HCT116 (cell line): ENCODE measurements at regions of chrX and their contacts with region 1.

Region 1: GRCh38 chrX:121308276-121308805 is 260.9 kb downstream of the GLUD2 start:
- DNase-seq: peak; percentile 10
- ATAC-seq: peak; percentile 83
- H3K4me3 ChIP-seq: no peak overlapping the region
- H3K27ac ChIP-seq: no peak overlapping the region
- H3K4me1 ChIP-seq: no peaks in the 10 kb centered on the region
- H3K27me3 ChIP-seq: no peaks in the 10 kb centered on the region
- CTCF ChIP-seq: peak; percentile 21 to 51 (median 49); a peak in 5 of 6 replicates
- POLR2A ChIP-seq: no peak
- RAD21 ChIP-seq: peak; percentile 63

Region 2: GRCh38 chrX:120790118-120790517 is 518.2 kb before region 1 on chrX:
- CTCF ChIA-PET with region 1: interaction called, 3 read pairs
- POLR2A ChIA-PET with region 1: no interaction called
- RAD21 ChIA-PET with region 1: no interaction called
- intact Hi-C with region 1: loop called (anchors 10 kb)
- DNase-seq: peak; percentile 38
- ATAC-seq: peak; percentile 50; the same call in 1 of the 2 replicates
- H3K4me3 ChIP-seq: no peak overlapping the region
- H3K27ac ChIP-seq: no peak overlapping the region
- H3K4me1 ChIP-seq: peaks cover 0 to 5% of the 10 kb centered on the region in 2 experiments; a peak in 2 of 4 replicates
- H3K27me3 ChIP-seq: no peaks in the 10 kb centered on the region
- CTCF ChIP-seq: peak; percentile 48 to 59 (median 57); a peak in 5 of 6 replicates
- POLR2A ChIP-seq: no peak
- RAD21 ChIP-seq: peak; percentile 81